Sciatic nerve (tissue), 2 donors: ENCODE measurements at regions of chr15 and their contacts with region 1.

Region 1: GRCh38 chr15:97525809-97526208 is 434.7 kb upstream of the ARRDC4 start:
- DNase-seq: no peak
- ATAC-seq: no peak

Region 2: DNA sequence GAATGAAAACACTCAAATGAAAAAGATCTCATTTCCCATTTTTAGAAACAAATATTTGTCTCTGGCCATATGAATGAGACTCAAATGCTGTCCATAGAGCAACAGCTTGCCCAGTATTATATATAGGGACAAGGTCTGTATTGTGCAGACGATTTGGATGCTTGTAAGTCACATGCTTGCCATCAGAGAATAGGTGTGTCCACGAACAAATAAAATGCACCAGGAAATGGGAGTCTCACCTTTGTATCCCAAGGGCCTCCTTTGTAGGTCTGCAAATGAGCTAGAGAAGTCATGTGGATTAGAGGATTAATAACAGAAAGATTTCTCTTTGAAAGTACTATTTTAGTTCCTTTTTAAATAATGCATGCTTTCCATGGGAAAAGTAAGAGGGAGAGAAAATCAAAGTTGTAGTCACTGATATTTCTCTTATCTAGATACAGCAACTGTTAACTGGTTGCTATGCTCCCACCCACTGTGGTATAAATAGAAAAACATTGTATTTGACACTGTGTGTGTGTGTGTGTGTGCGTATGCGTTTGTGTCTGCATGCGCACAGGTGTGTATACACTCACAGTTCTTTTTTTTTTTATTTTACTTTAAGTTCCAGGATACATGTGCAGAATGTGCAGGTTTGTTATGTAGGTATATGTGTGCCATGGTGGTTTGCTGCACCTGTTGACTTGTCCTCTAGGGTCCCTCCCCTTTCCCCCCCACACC is 51.3 kb after region 1 on chr15:
- intact Hi-C with region 1: no loop called
- DNase-seq: no peak
- ATAC-seq: no peak

Region 3: GRCh38 chr15:98051734-98052133 is 525.9 kb after region 1 on chr15:
- intact Hi-C with region 1: loop called (anchors 5 kb)
- DNase-seq: no peak
- ATAC-seq: no peak